ENCODE measurements at regions of chr13 and their contacts with region 1.

Region 1: GRCh38 chr13:51995677-51996551 is 15.3 kb downstream of the ATP7B start:
- DNase-seq: peak in 2 of 5 donors; percentile 18 to 32
- H3K4me3 ChIP-seq: peak overlapping the region in 1 of 3 donors; percentile 1
- H3K27ac ChIP-seq: peak overlapping the region in 1 of 2 donors; percentile 40
- H3K4me1 ChIP-seq: peaks cover 0 to 27% (median 18%) of the 10 kb centered on the region in 3 donors
- H3K27me3 ChIP-seq: no peaks in the 10 kb centered on the region
- CTCF ChIP-seq: no peak

Region 2: GRCh38 chr13:52128714-52129700 is 133.1 kb after region 1 on chr13 and contains the start of gene NEK5:
- intact Hi-C with region 1: loop called (anchors 10 kb)
- DNase-seq: peak; percentile 74 to 86 (median 83)
- H3K4me3 ChIP-seq: peak within 1 kb of the TSS; percentile 44 to 83 (median 58)
- H3K27ac ChIP-seq: peak within 1 kb of the TSS; percentile 17 to 63
- H3K4me1 ChIP-seq: peaks cover 0 to 6% (median 5%) of the 10 kb centered on the region in 3 donors
- H3K27me3 ChIP-seq: no peaks in the 10 kb centered on the region
- CTCF ChIP-seq: peak; percentile 57
- total RNA-seq, gene NEK5: 1.2 TPM